ENCODE measurements at regions of chrX and their contacts with region 1.

Region 1: GRCh38 chrX:54927409-54927808 is 6.8 kb downstream of the TRO start:
- DNase-seq: no peak
- H3K4me3 ChIP-seq: no peak overlapping the region
- H3K27ac ChIP-seq: no peak overlapping the region
- H3K4me1 ChIP-seq: no peaks in the 10 kb centered on the region
- H3K27me3 ChIP-seq: no peaks in the 10 kb centered on the region
- CTCF ChIP-seq: no peak

Region 2: GRCh38 chrX:55014897-55015299 is 87.5 kb after region 1 on chrX:
- CTCF ChIA-PET with region 1: no interaction called
- dilution Hi-C with region 1: loop called (anchors 5 kb)
- in situ Hi-C with region 1: no loop called
- intact Hi-C with region 1: no loop called
- DNase-seq: no peak
- H3K4me3 ChIP-seq: no peak overlapping the region
- H3K27ac ChIP-seq: no peak overlapping the region
- H3K4me1 ChIP-seq: no peaks in the 10 kb centered on the region
- H3K27me3 ChIP-seq: peaks cover 4% of the 10 kb centered on the region
- CTCF ChIP-seq: no peak